B cell (primary cell): ENCODE measurements at regions of chr1 and their contacts with region 1.

Region 1: GRCh38 chr1:8423650-8424538 is 106.0 kb downstream of the SLC45A1 start:
- DNase-seq: peak; percentile 75
- ATAC-seq: peak; percentile 28
- H3K4me3 ChIP-seq: peak overlapping the region; percentile 69 to 93 (median 84)
- H3K4me3 Mint-ChIP-seq: peak overlapping the region; percentile 90
- H3K27ac ChIP-seq: peak overlapping the region; percentile 77 to 88
- H3K27ac Mint-ChIP-seq: peak overlapping the region; percentile 91
- H3K4me1 ChIP-seq: peaks cover 79 to 80% of the 10 kb centered on the region in 2 donors
- H3K4me1 Mint-ChIP-seq: peaks cover 42% of the 10 kb centered on the region
- H3K27me3 ChIP-seq: no peaks in the 10 kb centered on the region
- H3K27me3 Mint-ChIP-seq: no peaks in the 10 kb centered on the region
- CTCF ChIP-seq: no peak

Region 2: GRCh38 chr1:8389981-8390535 is 33.8 kb before region 1 on chr1:
- CTCF ChIA-PET with region 1: interaction called, 4 read pairs
- POLR2A ChIA-PET with region 1: interaction called, 6 read pairs
- intact Hi-C with region 1: loop called (anchors 5 kb)
- DNase-seq: no peak
- ATAC-seq: no peak
- H3K4me3 ChIP-seq: no peak overlapping the region
- H3K4me3 Mint-ChIP-seq: no peak overlapping the region
- H3K27ac ChIP-seq: no peak overlapping the region
- H3K27ac Mint-ChIP-seq: peak overlapping the region; percentile 4
- H3K4me1 ChIP-seq: peaks cover 21 to 46% of the 10 kb centered on the region in 2 donors
- H3K4me1 Mint-ChIP-seq: peaks cover 68% of the 10 kb centered on the region
- H3K27me3 ChIP-seq: no peaks in the 10 kb centered on the region
- H3K27me3 Mint-ChIP-seq: no peaks in the 10 kb centered on the region
- CTCF ChIP-seq: no peak

Region 3: GRCh38 chr1:8409106-8409505 is 14.8 kb before region 1 on chr1:
- CTCF ChIA-PET with region 1: interaction called, 40 read pairs
- POLR2A ChIA-PET with region 1: interaction called, 3 read pairs
- intact Hi-C with region 1: loop called (anchors 1 kb)
- DNase-seq: peak; percentile 63
- ATAC-seq: peak; percentile 87
- H3K4me3 ChIP-seq: no peak overlapping the region
- H3K4me3 Mint-ChIP-seq: peak overlapping the region; percentile 11
- H3K27ac ChIP-seq: peak overlapping the region; percentile 6 to 51
- H3K27ac Mint-ChIP-seq: peak overlapping the region; percentile 27
- H3K4me1 ChIP-seq: peaks cover 11 to 21% of the 10 kb centered on the region in 2 donors
- H3K4me1 Mint-ChIP-seq: peaks cover 38% of the 10 kb centered on the region
- H3K27me3 ChIP-seq: no peaks in the 10 kb centered on the region
- H3K27me3 Mint-ChIP-seq: no peaks in the 10 kb centered on the region
- CTCF ChIP-seq: peak; percentile 71

Region 4: GRCh38 chr1:8456308-8456912 is 32.5 kb after region 1 on chr1:
- CTCF ChIA-PET with region 1: interaction called, 4 read pairs
- POLR2A ChIA-PET with region 1: interaction called, 5 read pairs
- intact Hi-C with region 1: loop called (anchors 5 kb)
- DNase-seq: no peak
- ATAC-seq: no peak
- H3K4me3 ChIP-seq: no peak overlapping the region
- H3K4me3 Mint-ChIP-seq: no peak overlapping the region
- H3K27ac ChIP-seq: no peak overlapping the region
- H3K27ac Mint-ChIP-seq: no peak overlapping the region
- H3K4me1 ChIP-seq: peaks cover 25% of the 10 kb centered on the region in 2 donors
- H3K4me1 Mint-ChIP-seq: peaks cover 38% of the 10 kb centered on the region
- H3K27me3 ChIP-seq: no peaks in the 10 kb centered on the region
- H3K27me3 Mint-ChIP-seq: no peaks in the 10 kb centered on the region
- CTCF ChIP-seq: no peak

Region 5: DNA sequence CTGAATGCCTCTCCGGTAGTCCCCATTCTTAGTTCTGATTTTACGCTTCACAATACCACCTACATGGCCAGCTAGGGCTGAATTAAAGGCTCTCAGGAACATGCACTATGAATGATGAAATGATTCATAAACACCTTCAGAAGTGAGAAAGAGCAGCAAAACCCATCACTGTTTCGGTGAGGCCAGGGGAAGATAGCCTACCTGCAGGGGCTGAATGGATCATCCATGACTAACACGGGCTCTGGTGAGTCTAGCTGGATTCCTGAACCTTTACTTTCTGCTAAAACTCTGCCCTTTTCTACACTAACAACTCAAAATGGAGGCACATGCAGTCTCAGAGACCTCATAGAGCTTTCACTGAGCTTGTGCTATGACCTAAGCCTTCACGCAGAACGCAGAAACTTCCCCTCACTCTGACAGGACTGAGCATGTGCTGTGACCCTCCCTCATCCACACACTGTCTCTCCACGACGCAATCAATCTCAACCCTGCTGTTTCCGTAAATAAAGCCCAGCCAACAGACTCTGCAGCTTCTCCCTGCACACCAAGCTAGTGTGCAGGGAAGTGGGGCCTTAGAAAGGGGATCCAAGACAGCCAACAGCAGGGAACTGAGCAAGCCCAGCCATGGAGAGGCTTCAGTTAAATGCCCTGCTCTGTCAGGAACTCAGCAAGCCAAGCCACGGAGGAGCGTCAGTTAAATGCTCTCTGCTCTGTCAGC is 101.8 kb after region 1 on chr1:
- CTCF ChIA-PET with region 1: interaction called, 3 read pairs
- POLR2A ChIA-PET with region 1: interaction called, 4 read pairs
- intact Hi-C with region 1: loop called (anchors 5 kb)
- DNase-seq: peak; percentile 91
- ATAC-seq: peak; percentile 96
- H3K4me3 ChIP-seq: peak overlapping the region; percentile 1 to 78 (median 60)
- H3K4me3 Mint-ChIP-seq: no peak overlapping the region
- H3K27ac ChIP-seq: peak overlapping the region; percentile 94 to 98
- H3K27ac Mint-ChIP-seq: no peak overlapping the region
- H3K4me1 ChIP-seq: peaks cover 41 to 45% of the 10 kb centered on the region in 2 donors
- H3K4me1 Mint-ChIP-seq: peaks cover 57% of the 10 kb centered on the region
- H3K27me3 ChIP-seq: no peaks in the 10 kb centered on the region
- H3K27me3 Mint-ChIP-seq: no peaks in the 10 kb centered on the region
- CTCF ChIP-seq: no peak

Region 6: DNA sequence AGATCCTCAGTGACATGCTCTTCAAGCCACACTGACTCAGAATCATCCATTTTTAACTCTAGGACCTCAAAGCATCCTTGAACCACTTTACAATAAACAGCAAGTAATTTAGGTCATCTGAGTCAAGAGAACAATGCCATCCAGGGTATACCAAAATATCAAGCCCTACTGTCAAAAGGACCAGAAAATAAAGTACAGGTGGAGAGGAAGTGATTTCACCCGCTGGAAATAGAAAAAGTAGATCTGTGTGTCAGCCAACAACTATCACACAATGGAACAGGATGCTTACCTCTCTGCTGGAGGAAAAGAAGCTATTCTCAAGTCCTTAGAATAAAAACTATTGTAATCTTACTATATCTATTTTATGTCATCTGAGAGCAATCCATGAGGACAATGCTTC is 356.5 kb after region 1 on chr1:
- CTCF ChIA-PET with region 1: no interaction called
- POLR2A ChIA-PET with region 1: no interaction called
- intact Hi-C with region 1: no loop called
- DNase-seq: no peak
- ATAC-seq: no peak
- H3K4me3 ChIP-seq: no peak overlapping the region
- H3K4me3 Mint-ChIP-seq: no peak overlapping the region
- H3K27ac ChIP-seq: no peak overlapping the region
- H3K27ac Mint-ChIP-seq: no peak overlapping the region
- H3K4me1 ChIP-seq: peaks cover 3 to 13% of the 10 kb centered on the region in 2 donors
- H3K4me1 Mint-ChIP-seq: peaks cover 28% of the 10 kb centered on the region
- H3K27me3 ChIP-seq: no peaks in the 10 kb centered on the region
- H3K27me3 Mint-ChIP-seq: no peaks in the 10 kb centered on the region
- CTCF ChIP-seq: no peak

Region 7: GRCh38 chr1:8817406-8818324 is 393.8 kb after region 1 on chr1 and contains the start of gene RERE:
- CTCF ChIA-PET with region 1: no interaction called
- POLR2A ChIA-PET with region 1: no interaction called
- intact Hi-C with region 1: loop called (anchors 1 kb)
- DNase-seq: peak; percentile 97
- ATAC-seq: peak; percentile 94
- H3K4me3 ChIP-seq: peak within 1 kb of the TSS; percentile 74 to 99 (median 95)
- H3K4me3 Mint-ChIP-seq: peak within 1 kb of the TSS; percentile 89
- H3K27ac ChIP-seq: peak within 1 kb of the TSS; percentile 85 to 95
- H3K27ac Mint-ChIP-seq: peak within 1 kb of the TSS; percentile 90
- H3K4me1 ChIP-seq: peaks cover 23 to 25% of the 10 kb centered on the region in 2 donors
- H3K4me1 Mint-ChIP-seq: peaks cover 40% of the 10 kb centered on the region
- H3K27me3 ChIP-seq: no peaks in the 10 kb centered on the region
- H3K27me3 Mint-ChIP-seq: peaks cover 5% of the 10 kb centered on the region
- CTCF ChIP-seq: no peak
- total RNA-seq, gene RERE: 132 and 146 TPM in 2 replicates